ENCODE measurements at regions of chr1 and their contacts with region 1.

Region 1: DNA sequence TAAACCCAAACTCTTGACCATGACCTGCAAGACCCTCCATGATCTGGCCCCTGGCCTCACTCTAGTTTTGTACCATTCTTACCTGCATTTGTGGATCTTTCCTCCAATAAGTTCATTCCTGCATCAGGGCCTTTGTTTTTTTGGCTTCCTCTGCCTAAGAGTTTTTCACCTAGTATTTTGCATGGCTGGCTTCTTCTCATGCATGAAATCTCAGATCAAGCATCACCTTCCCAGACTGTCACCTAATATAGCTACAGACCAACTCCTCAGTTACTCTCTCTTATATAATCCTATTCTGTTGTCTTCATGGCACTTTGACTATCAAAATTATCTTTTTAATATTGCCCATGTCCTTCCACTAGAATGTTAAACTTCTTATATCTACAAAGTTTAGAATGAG is 54.2 kb downstream of the BTBD8 start:
- DNase-seq: no peak
- H3K4me3 Mint-ChIP-seq: no peak overlapping the region
- H3K27ac Mint-ChIP-seq: no peak overlapping the region
- H3K4me1 Mint-ChIP-seq: no peaks in the 10 kb centered on the region
- H3K27me3 Mint-ChIP-seq: no peaks in the 10 kb centered on the region

Region 2: DNA sequence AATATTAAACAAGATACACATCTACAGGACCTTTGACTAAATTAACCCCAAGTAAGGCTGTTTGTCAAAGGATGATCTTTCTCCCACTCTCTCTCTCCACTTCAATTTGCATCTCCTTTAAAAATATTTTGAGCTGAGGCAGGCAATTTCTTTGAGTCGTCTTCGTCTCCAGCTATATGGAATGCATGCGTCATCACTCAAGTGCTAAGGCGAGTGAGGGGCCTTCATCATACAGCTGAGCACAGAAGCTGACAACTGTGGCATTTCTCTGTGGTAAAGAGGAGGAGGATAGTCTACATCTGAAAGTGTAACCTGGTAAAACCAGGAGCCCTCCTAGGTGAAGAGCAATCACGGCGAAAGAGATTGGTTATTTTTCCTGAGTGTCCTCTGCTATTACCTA is 96.9 kb before region 1 on chr1:
- intact Hi-C with region 1: no loop called
- DNase-seq: no peak
- H3K4me3 Mint-ChIP-seq: no peak overlapping the region
- H3K27ac Mint-ChIP-seq: no peak overlapping the region
- H3K4me1 Mint-ChIP-seq: no peaks in the 10 kb centered on the region
- H3K27me3 Mint-ChIP-seq: peaks cover 4% of the 10 kb centered on the region

Region 3: DNA sequence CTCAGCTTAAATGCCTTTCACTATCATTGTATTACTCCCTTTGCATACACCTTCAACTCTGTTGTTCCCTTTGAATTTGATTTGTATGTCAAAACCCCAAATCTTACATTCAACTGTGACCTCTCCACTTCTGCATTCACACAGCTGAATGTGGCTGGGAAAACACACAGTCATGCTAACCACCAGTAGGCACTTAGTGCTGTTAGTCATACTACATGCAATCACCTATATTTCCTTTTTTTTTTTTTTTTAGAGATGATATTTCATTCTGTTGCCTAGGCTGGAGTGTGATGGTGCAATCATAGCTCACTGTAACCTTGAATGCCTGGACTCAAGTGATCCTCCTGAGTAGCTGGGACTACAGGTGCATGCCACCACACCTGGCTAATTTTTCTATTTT is 38.0 kb before region 1 on chr1:
- intact Hi-C with region 1: loop called (anchors 5 kb)
- DNase-seq: no peak
- H3K4me3 Mint-ChIP-seq: no peak overlapping the region
- H3K27ac Mint-ChIP-seq: no peak overlapping the region
- H3K4me1 Mint-ChIP-seq: peaks cover 4% of the 10 kb centered on the region
- H3K27me3 Mint-ChIP-seq: no peaks in the 10 kb centered on the region

Region 4: DNA sequence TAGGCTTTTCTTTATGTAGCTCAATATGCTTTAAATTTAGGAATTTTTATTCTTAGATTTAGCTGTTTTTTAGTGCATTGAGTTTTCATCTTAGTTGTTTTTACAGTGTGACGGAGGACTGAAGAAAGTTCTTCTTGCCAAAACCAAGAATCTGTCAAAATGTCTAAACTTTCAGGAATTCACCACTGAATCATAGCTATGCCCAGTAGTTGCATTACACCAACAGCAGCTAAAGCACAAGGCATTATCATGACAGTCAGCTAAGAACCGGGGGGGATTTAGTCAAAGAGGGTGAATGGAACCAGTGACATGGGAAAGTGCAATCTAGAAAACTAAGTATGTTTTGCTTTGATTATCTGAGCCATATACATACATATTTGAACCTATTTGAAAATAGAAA is 76.8 kb after region 1 on chr1:
- intact Hi-C with region 1: no loop called
- DNase-seq: no peak
- H3K4me3 Mint-ChIP-seq: no peak overlapping the region
- H3K27ac Mint-ChIP-seq: no peak overlapping the region
- H3K4me1 Mint-ChIP-seq: peaks cover 13% of the 10 kb centered on the region
- H3K27me3 Mint-ChIP-seq: no peaks in the 10 kb centered on the region

Measured in activated T-helper 2 cell treated with anti-CD3 and anti-CD28 coated beads, Interferon-gamma antibody, Interleukin-2, Interleukin-4, amounts not matched to agents 10 μg/mL and 5 μg/mL and 100 μg/mL, durations not matched to agents 14 hours and 24 hours and 36 hours (primary cell).